ENCODE measurements at regions of chr9 and their contacts with region 1.

Region 1: GRCh38 chr9:112097712-112098688 is 77.1 kb downstream of the SUSD1 start:
- DNase-seq: peak; percentile 60
- H3K4me3 ChIP-seq: no peak overlapping the region; a peak in 1 of 4 replicates
- H3K27ac ChIP-seq: no peak overlapping the region
- H3K4me1 ChIP-seq: no peaks in the 10 kb centered on the region; a peak in 1 of 4 replicates
- H3K27me3 ChIP-seq: no peaks in the 10 kb centered on the region
- CTCF ChIP-seq: peak; percentile 86
- EP300 ChIP-seq: no peak
- RAD21 ChIP-seq: peak; percentile 87

Region 2: GRCh38 chr9:112050544-112051475 is 47.2 kb before region 1 on chr9:
- CTCF ChIA-PET with region 1: no interaction called
- POLR2A ChIA-PET with region 1: no interaction called
- DNase-seq: no peak
- H3K4me3 ChIP-seq: peak overlapping the region in 1 of 2 experiments; percentile 6; a peak in 1 of 4 replicates
- H3K27ac ChIP-seq: peak overlapping the region; percentile 88 to 89
- H3K4me1 ChIP-seq: peaks cover 14 to 17% of the 10 kb centered on the region in 2 experiments
- H3K27me3 ChIP-seq: no peaks in the 10 kb centered on the region
- CTCF ChIP-seq: no peak
- EP300 ChIP-seq: peak in 1 of 2 experiments; percentile 94; a peak in 2 of 4 replicates
- RAD21 ChIP-seq: no peak

Region 3: GRCh38 chr9:112086627-112087026 is 11.4 kb before region 1 on chr9:
- CTCF ChIA-PET with region 1: interaction called, 28 read pairs
- POLR2A ChIA-PET with region 1: no interaction called
- DNase-seq: peak; percentile 42
- H3K4me3 ChIP-seq: no peak overlapping the region; a peak in 1 of 4 replicates
- H3K27ac ChIP-seq: no peak overlapping the region
- H3K4me1 ChIP-seq: no peaks in the 10 kb centered on the region
- H3K27me3 ChIP-seq: no peaks in the 10 kb centered on the region
- CTCF ChIP-seq: peak; percentile 63
- EP300 ChIP-seq: no peak
- RAD21 ChIP-seq: peak; percentile 75

Region 4: DNA sequence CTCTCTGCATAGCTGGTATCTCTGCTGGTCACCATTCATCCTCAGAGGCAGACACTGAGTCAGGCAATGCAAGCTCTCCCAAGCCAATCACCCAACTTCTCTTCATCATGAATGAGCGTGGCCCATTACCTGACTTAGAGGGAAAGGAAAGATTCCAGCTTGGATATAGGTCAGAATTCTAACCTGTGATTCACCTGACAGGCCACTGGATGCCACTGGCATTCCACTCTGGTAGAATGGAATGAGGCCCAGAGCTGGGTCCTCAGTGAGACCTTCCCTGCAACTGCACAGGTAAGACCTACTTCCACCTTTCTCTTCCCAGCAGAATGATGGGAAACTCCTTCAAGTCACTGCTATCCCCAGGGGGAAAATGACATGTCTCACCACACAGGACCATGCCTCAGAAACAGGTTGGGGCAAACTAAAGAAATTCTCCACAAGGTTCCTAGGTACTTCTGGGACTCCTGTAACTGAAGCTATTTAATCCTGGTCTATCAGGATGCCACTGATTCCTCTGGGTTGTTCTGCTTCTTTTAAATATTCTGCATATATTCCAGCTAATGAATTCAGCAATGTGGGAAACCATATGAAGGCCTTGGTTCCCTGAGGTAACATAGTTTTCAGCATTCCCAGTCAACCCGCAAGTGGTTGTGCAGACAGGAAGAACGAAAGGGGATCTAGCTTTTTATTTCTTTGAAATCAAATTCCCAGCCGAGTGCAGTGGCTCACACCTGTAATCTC is 15.1 kb after region 1 on chr9:
- CTCF ChIA-PET with region 1: interaction called, 18 read pairs
- POLR2A ChIA-PET with region 1: no interaction called
- DNase-seq: peak; percentile 24
- H3K4me3 ChIP-seq: no peak overlapping the region
- H3K27ac ChIP-seq: peak overlapping the region in 1 of 2 experiments; percentile 88; a peak in 2 of 4 replicates
- H3K4me1 ChIP-seq: peaks cover 0 to 21% of the 10 kb centered on the region in 2 experiments; a peak in 1 of 4 replicates
- H3K27me3 ChIP-seq: no peaks in the 10 kb centered on the region
- CTCF ChIP-seq: peak; percentile 50
- EP300 ChIP-seq: no peak
- RAD21 ChIP-seq: peak; percentile 71

Region 5: DNA sequence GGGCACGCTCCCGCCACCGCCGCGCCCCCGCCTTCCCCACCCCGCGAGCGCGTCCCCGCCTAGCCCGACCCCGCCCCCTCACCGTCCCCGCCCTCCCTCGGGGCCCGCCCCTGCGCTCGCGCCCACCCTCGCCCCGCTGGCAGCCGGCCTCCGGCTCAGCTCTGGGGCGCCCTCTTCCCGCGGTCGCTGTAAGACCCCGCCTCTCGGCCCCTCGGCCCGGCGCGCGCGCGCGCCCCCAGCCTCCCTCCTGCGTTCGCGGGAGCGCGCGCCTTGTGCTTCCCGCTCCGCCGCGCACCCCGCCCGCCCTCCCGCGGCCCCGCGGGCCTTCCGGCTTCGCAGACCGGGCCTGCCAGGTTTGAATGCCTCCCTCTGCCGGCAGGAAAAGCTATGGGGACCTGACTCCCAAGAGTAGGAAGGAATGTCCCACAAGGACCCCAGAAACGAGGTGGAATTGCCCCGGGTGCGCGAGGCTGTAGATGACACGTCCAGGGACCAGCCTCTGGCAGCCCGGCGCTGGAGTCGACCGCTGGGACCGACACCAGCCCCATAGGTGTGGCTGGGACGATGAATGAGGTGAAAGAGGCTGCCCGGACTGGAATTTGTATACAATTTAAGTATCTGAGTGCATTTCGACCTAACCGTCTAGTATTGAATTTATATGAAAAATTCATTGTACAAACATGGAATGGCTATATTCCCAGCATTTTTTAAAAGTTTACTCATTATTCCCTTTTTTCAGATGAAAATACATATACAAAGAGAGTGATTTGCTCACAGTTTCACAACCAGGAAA is 235.8 kb after region 1 on chr9:
- CTCF ChIA-PET with region 1: interaction called, 46 read pairs
- POLR2A ChIA-PET with region 1: no interaction called
- DNase-seq: peak; percentile 99
- H3K4me3 ChIP-seq: peak overlapping the region; percentile 93 to 99
- H3K27ac ChIP-seq: peak overlapping the region; percentile 95 to 96
- H3K4me1 ChIP-seq: peaks cover 3 to 11% of the 10 kb centered on the region in 2 experiments; a peak in 2 of 4 replicates
- H3K27me3 ChIP-seq: no peaks in the 10 kb centered on the region
- CTCF ChIP-seq: peak; percentile 57
- EP300 ChIP-seq: no peak
- RAD21 ChIP-seq: peak; percentile 50

Region 6: DNA sequence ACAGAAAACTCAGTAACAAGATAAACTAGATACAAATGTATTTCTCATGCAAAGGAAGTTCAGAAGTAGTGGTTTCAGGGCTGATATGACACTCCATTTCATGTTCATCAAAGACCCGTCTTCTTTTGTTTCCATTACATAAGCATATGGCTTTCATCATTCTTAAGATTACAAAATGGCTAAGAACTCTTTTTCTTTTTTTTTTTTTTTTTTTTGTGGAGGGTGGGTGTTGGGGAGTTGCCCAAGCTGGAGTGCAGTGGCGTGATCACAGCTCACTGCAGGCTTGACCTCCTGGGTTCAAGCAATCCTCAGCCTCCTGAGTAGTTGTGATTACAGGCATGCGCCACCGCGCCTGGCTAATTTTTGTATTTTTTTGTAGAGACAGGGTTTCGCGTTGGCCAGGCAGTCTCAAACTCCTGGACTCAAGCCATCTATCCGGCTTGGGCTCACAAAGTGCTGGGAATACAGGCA is 257.5 kb after region 1 on chr9:
- CTCF ChIA-PET with region 1: interaction called, 50 read pairs
- POLR2A ChIA-PET with region 1: no interaction called
- DNase-seq: no peak
- H3K4me3 ChIP-seq: no peak overlapping the region
- H3K27ac ChIP-seq: no peak overlapping the region
- H3K4me1 ChIP-seq: no peaks in the 10 kb centered on the region
- H3K27me3 ChIP-seq: no peaks in the 10 kb centered on the region
- CTCF ChIP-seq: no peak
- EP300 ChIP-seq: no peak
- RAD21 ChIP-seq: no peak